ENCODE measurements at regions of chr13 and their contacts with region 1.

Region 1: GRCh38 chr13:64556376-64556775 is 2673.8 kb downstream of the PCDH9 start:
- DNase-seq: no peak
- ATAC-seq: no peak
- H3K4me3 ChIP-seq: no peak overlapping the region
- H3K27ac ChIP-seq: no peak overlapping the region
- H3K4me1 ChIP-seq: no peaks in the 10 kb centered on the region
- H3K27me3 ChIP-seq: no peaks in the 10 kb centered on the region

Region 2: GRCh38 chr13:64471916-64472315 is 84.5 kb before region 1 on chr13:
- intact Hi-C with region 1: no loop called
- DNase-seq: no peak
- ATAC-seq: no peak
- H3K4me3 ChIP-seq: no peak overlapping the region
- H3K27ac ChIP-seq: no peak overlapping the region
- H3K4me1 ChIP-seq: no peaks in the 10 kb centered on the region
- H3K27me3 ChIP-seq: no peaks in the 10 kb centered on the region

Region 3: GRCh38 chr13:64591971-64592370 is 35.6 kb after region 1 on chr13:
- intact Hi-C with region 1: loop called in 1 of 4 experiments (anchors 5 kb)
- DNase-seq: no peak
- ATAC-seq: no peak
- H3K4me3 ChIP-seq: no peak overlapping the region
- H3K27ac ChIP-seq: no peak overlapping the region
- H3K4me1 ChIP-seq: no peaks in the 10 kb centered on the region
- H3K27me3 ChIP-seq: no peaks in the 10 kb centered on the region

Region 4: GRCh38 chr13:64675299-64675818 is 119.0 kb after region 1 on chr13:
- intact Hi-C with region 1: no loop called
- DNase-seq: no peak
- ATAC-seq: no peak
- H3K4me3 ChIP-seq: no peak overlapping the region
- H3K27ac ChIP-seq: no peak overlapping the region
- H3K4me1 ChIP-seq: no peaks in the 10 kb centered on the region
- H3K27me3 ChIP-seq: no peaks in the 10 kb centered on the region

Measured in right cardiac atrium (tissue), 5 donors.